MCF 10A (cell line): ENCODE measurements at regions of chr1 and their contacts with region 1.

Region 1: DNA sequence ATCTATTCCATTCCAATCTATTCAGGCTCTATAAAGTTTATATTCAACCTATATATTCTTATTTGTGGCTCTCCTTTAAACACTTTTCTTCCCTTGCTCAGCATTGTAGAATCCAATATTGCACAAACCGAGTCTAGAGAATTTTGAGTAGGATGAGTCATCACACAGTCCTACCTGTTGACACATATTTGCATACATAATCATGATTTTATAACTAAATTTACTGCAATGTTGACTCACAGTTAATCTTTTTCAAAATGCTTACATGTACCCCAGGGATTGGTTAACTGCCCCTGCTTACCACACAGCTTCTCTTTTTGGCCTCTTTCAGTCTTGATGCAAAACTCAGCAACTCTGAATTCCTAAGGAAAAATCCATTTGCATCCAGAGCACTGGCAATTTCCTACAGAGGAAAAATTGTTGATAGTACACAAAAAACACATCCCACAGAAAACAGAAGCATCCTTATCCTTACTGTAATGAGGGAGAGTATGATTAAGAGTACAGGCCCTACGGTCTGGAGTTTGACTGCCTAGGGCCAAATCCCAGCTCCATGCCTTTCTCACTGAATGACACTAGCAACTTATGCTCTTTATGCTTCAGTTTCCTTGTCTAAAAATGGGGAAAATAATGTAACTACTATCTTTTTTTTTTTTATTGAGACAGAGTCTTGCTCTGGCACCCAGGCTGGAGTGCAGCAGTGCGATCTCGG is 28.0 kb upstream of the CEP350 start:
- DNase-seq: peak; percentile 90
- H3K4me3 Mint-ChIP-seq: no peak overlapping the region
- H3K27ac Mint-ChIP-seq: peak overlapping the region; percentile 91
- H3K4me1 Mint-ChIP-seq: peaks cover 17% of the 10 kb centered on the region
- H3K27me3 Mint-ChIP-seq: no peaks in the 10 kb centered on the region
- CTCF ChIP-seq: no peak

Region 2: DNA sequence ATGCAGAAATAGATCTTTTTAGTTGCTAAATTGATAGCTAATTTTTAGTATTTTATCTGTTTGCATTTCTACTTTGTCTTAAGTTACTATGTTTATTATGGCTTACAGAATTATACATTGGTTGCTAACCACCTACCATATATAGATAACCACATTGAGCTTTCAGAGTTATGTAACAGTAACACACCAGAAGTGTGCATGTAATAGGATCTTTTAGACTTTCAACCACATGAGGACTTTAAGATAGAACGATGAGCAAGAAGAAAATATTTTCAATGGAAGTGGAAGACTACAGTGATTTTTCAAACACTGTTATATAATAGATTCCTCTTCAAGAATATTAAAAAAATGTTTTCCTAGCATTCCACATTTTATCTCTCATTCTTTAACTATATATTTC is 15.7 kb before region 1 on chr1:
- CTCF ChIA-PET with region 1: interaction called, 18 read pairs
- POLR2A ChIA-PET with region 1: interaction called, 27 read pairs
- intact Hi-C with region 1: no loop called
- DNase-seq: no peak
- H3K4me3 Mint-ChIP-seq: no peak overlapping the region
- H3K27ac Mint-ChIP-seq: no peak overlapping the region
- H3K4me1 Mint-ChIP-seq: no peaks in the 10 kb centered on the region
- H3K27me3 Mint-ChIP-seq: no peaks in the 10 kb centered on the region
- CTCF ChIP-seq: no peak

Region 3: DNA sequence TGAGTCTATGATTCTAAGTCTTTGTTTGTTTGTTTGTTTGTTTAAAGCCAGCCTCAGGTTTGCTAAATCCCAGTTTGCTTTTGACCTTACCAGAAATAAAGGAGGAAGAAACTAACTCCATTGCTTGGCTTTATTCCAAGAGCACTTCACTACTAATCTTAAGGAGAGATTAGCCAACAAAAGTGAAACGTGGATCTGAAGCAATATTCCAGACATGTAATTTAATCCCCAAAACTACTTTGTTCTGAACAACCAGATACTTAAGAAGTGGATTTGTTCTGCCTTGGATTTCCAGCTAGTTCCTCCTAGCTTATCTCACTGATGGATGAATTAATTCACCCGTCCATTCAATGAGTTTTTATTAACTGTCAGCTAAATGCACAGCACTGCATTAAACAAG is 12.1 kb after region 1 on chr1:
- CTCF ChIA-PET with region 1: interaction called, 3 read pairs
- POLR2A ChIA-PET with region 1: interaction called, 14 read pairs
- intact Hi-C with region 1: no loop called
- DNase-seq: peak; percentile 73
- H3K4me3 Mint-ChIP-seq: no peak overlapping the region
- H3K27ac Mint-ChIP-seq: no peak overlapping the region
- H3K4me1 Mint-ChIP-seq: peaks cover 11% of the 10 kb centered on the region
- H3K27me3 Mint-ChIP-seq: no peaks in the 10 kb centered on the region
- CTCF ChIP-seq: no peak

Region 4: GRCh38 chr1:180027949-180028445 is 101.3 kb after region 1 on chr1:
- CTCF ChIA-PET with region 1: no interaction called
- POLR2A ChIA-PET with region 1: interaction called, 12 read pairs
- intact Hi-C with region 1: no loop called
- DNase-seq: peak; percentile 90
- H3K4me3 Mint-ChIP-seq: no peak overlapping the region
- H3K27ac Mint-ChIP-seq: peak overlapping the region; percentile 69
- H3K4me1 Mint-ChIP-seq: peaks cover 22% of the 10 kb centered on the region
- H3K27me3 Mint-ChIP-seq: no peaks in the 10 kb centered on the region
- CTCF ChIP-seq: no peak